Posterior cingulate gyrus (tissue), 11 donors: ENCODE measurements at regions of chr6 and their contacts with region 1.

Region 1: GRCh38 chr6:80214436-80215022 is 108.1 kb downstream of the BCKDHB start:
- DNase-seq: peak in 6 of 10 donors; percentile 18 to 78 (median 32)

Region 2: DNA sequence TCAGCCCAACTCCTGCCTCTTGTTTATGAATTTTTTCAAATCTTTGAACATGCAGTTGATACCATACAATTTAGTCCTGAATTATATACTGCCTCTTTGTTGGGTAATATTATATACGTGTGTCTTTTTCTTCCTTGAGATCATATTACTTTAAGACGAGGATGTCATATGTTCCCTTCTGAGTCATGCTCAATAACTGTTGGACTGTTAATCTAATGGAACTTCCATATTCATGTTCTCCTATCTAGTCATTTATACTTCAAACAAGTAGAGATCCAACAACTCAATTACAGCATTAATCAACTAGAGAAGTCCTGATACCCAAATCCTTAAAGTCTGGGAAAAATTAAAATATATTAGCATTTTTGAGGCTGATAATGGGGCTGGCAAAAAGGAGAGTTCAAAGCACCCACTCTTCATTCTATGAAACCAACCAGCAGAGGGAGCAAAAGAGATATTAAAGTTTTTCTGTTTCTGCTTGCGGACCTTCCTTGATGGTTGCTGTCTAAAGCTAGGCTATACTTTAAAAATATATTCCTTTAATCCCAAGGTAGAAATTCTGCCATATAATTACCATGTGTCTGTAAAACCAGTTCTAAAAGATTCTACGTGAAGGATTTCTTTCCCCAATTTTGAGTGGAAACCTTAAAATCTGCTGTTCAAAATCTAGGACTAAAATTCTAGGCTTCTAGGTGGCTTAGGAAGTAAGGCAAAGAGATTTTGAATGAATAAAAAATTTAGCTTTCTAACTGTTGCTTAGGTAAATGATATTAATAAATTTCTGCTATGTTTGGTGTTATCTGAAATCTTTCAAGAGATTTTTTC is 390.8 kb after region 1 on chr6:
- intact Hi-C with region 1: loop called (anchors 10 kb)
- DNase-seq: no peak